A549 (cell line): ENCODE measurements at regions of chr11 and their contacts with region 1.

Region 1: GRCh38 chr11:32318071-32319055 is 117.0 kb downstream of the WT1 start:
- DNase-seq: no peak
- ATAC-seq: no peak
- H3K4me3 ChIP-seq: no peak overlapping the region
- H3K27ac ChIP-seq: no peak overlapping the region
- H3K4me1 ChIP-seq: peaks cover 5% of the 10 kb centered on the region
- CTCF ChIP-seq: no peak
- EP300 ChIP-seq: no peak
- POLR2A ChIP-seq: no peak
- RAD21 ChIP-seq: no peak

Region 2: DNA sequence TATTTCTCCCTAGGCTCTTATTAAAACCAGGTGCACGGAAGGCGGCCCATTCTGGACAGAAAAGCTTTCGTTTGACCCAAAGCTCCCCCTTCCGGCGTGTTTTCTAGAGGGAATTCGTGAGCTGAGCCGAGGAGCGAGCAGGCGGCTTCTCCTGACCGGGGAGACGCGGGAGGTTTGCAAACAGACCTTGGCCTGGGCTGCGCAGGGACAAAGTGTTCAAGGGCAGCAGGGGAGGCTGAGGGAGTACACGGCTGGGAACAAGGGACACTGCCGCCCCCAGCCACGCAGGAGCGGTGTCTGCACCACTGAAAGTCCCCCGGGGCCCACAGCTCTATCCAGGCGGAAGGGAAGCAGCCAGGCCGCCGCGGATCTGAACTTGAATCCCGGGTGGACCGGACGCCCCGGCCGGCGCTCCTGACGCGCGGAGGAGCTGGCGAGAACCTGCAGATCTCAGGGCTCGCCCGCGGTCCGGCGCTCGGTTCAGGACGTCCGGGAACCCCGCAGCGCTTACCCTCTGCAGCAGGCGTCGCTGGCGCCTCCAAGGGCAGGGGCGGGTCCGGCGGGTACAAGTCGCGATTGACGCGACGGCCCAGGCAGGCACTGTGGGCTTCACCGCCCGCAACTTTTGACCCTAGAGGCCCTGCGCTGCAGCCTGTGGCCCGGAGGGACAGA is 15.1 kb after region 1 on chr11:
- CTCF ChIA-PET with region 1: interaction called, 83 read pairs
- POLR2A ChIA-PET with region 1: no interaction called
- DNase-seq: peak; percentile 72 to 73
- ATAC-seq: peak; percentile 87 to 88
- H3K4me3 ChIP-seq: peak overlapping the region; percentile 46
- H3K27ac ChIP-seq: peak overlapping the region; percentile 69 to 88
- H3K4me1 ChIP-seq: peaks cover 5% of the 10 kb centered on the region; the same call in 2 of the 3 replicates
- CTCF ChIP-seq: peak; percentile 50
- EP300 ChIP-seq: no peak
- POLR2A ChIP-seq: peak; percentile 21; the same call in 1 of the 2 replicates
- RAD21 ChIP-seq: peak; percentile 40 to 50; a peak in 4 of 5 replicates